ENCODE measurements at regions of chr11 and their contacts with region 1.

Region 1: GRCh38 chr11:123729602-123730001 is 11.9 kb downstream of the ZNF202 start:
- DNase-seq: no peak
- ATAC-seq: no peak
- H3K4me3 ChIP-seq: no peak overlapping the region
- H3K27ac ChIP-seq: no peak overlapping the region
- H3K4me1 ChIP-seq: no peaks in the 10 kb centered on the region
- H3K27me3 ChIP-seq: no peaks in the 10 kb centered on the region
- CTCF ChIP-seq: no peak

Region 2: DNA sequence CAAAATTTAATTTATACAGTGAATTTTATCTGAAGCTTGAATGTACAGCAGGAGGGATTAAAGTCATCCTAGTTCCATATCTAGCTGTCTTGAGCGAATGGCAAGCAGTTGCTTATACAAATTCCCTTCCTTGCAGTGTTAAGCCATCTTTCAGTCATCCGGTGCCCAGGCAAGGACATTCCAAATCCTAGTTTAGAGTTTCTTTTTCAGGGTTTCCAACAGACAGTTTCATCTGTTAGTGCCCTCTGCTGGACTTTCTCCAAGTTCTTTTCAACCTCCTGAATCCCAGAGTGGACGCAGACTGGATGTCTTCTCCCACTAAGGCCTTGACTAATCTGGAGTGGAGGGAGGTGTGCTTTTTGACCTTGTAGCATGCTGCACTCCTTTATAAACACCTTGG is 254.1 kb before region 1 on chr11:
- CTCF ChIA-PET with region 1: no interaction called
- POLR2A ChIA-PET with region 1: no interaction called
- in situ Hi-C with region 1: no loop called
- intact Hi-C with region 1: no loop called
- DNase-seq: no peak
- ATAC-seq: no peak
- H3K4me3 ChIP-seq: no peak overlapping the region
- H3K27ac ChIP-seq: no peak overlapping the region
- H3K4me1 ChIP-seq: no peaks in the 10 kb centered on the region
- H3K27me3 ChIP-seq: peaks cover 8% of the 10 kb centered on the region
- CTCF ChIP-seq: peak; percentile 55

Region 3: DNA sequence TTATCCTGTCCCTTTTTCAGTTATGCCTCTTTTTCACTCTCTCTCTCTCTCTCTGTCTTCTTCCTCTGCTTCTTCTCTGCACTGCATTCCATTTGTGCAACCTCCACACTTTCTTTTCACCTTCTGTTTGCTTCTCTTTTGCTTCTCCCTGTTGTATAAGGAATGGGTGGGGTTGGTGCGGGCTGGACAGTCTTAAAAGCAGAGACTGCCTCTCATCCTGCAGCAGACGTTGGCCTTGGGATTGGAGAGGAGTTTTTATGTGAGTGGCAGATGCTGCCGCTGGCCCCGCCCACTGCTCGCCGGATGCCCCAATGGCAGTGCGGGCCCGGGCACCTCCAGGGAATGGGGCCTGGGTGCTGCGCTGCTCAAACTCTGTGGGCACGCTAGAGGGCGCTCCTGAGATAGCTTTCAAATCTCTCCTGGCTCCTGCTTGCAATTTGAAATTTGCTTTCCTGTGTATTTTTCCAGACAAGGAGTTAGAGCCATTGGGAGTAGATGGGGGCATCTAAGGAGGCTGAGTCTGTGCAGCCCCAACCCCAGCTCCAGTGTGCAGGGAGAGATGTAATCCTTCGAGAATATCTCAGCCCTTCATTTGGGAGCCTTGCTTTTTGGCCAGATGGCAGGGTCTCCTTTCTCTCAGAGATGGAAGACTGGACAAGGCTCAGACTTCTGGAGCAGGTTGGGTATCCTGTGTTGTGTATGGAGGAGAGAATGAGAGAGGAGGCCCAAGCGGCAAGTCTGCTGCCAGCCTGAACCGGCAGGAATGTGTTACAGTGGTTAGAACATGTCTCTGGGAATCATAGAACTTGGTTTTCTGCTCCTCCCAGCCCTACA is 218.3 kb before region 1 on chr11:
- CTCF ChIA-PET with region 1: no interaction called
- POLR2A ChIA-PET with region 1: no interaction called
- in situ Hi-C with region 1: no loop called
- intact Hi-C with region 1: no loop called
- DNase-seq: peak; percentile 45
- ATAC-seq: peak; percentile 99
- H3K4me3 ChIP-seq: no peak overlapping the region
- H3K27ac ChIP-seq: no peak overlapping the region
- H3K4me1 ChIP-seq: peaks cover 3% of the 10 kb centered on the region; the same call in 1 of the 2 replicates
- H3K27me3 ChIP-seq: peaks cover 13% of the 10 kb centered on the region
- CTCF ChIP-seq: peak; percentile 98

Region 4: GRCh38 chr11:123719452-123719851 is 10.2 kb before region 1 on chr11:
- CTCF ChIA-PET with region 1: no interaction called
- POLR2A ChIA-PET with region 1: interaction called, 10 read pairs
- in situ Hi-C with region 1: no loop called
- intact Hi-C with region 1: no loop called
- DNase-seq: no peak
- ATAC-seq: no peak
- H3K4me3 ChIP-seq: no peak overlapping the region
- H3K27ac ChIP-seq: no peak overlapping the region
- H3K4me1 ChIP-seq: no peaks in the 10 kb centered on the region
- H3K27me3 ChIP-seq: peaks cover 10% of the 10 kb centered on the region
- CTCF ChIP-seq: no peak

Measured in Panc1 (cell line).